ENCODE measurements at regions of chr3 and their contacts with region 1.

Region 1: DNA sequence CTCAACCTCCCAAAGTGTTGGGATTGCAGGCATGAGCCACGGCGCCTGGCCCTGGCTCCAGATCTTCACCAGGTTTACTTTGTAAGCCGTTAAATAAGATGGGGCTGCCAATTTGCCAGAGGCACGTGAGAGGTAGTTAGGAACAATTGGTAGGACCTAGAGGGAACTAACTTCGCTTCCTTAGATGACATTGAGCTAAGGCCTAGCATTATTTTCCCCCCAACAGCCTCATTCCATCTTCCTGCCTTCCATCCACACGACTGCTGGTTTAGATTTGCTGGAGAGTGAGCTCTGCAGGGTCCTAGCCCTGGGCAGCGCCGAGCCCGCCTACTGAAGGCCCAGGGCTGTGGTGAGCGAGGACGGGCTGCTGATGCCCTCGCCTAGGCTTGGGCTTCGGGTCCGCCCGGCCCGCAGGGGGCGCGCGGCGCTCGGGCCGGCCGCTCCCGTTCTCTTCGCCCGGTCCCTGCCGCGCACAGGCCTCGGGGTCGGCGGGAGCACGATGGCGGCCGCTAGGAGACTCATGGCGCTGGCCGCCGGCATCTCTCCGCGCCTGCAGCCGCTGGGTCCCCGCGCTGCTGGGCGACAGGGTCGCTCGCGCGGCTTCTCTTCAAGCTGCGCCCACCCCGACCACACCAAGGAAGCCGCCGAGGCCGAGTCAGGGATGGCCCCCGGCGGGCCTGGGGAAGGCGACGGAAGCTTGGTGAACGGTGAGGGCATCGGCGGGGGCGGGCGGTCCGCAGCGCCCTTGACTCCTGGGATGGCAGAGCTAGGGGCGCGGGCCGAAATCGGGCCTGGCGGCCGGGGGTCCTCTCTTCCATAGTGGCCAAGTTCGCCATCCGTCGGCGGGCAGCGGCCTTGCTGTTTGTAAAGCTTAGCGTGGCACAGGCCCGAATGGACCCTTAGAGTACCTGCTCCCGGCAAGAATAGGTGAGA is 21.9 kb downstream of the DHX30 start:
- DNase-seq: peak; percentile 72 to 89
- H3K4me3 ChIP-seq: peak overlapping the region; percentile 66
- H3K4me3 Mint-ChIP-seq: peak overlapping the region; percentile 81
- H3K27ac Mint-ChIP-seq: peak overlapping the region; percentile 35
- H3K4me1 ChIP-seq: 0 out of 2 replicates have a peak, but pooled peaks cover 3% of the 10 kb centered on the region
- H3K4me1 Mint-ChIP-seq: peaks cover 6% of the 10 kb centered on the region
- H3K27me3 ChIP-seq: no peaks in the 10 kb centered on the region
- H3K27me3 Mint-ChIP-seq: no peaks in the 10 kb centered on the region
- CTCF ChIP-seq: peak; percentile 60 to 79

Region 2: GRCh38 chr3:47802734-47803477 is 21.9 kb before region 1 on chr3 and contains the start of gene DHX30:
- CTCF ChIA-PET with region 1: interaction called, 8 read pairs
- POLR2A ChIA-PET with region 1: no interaction called
- intact Hi-C with region 1: loop called (anchors 2 kb)
- DNase-seq: peak; percentile 84 to 89
- H3K4me3 ChIP-seq: peak within 1 kb of the TSS; percentile 50
- H3K4me3 Mint-ChIP-seq: peak within 1 kb of the TSS; percentile 89
- H3K27ac Mint-ChIP-seq: peak within 1 kb of the TSS; percentile 92
- H3K4me1 ChIP-seq: peaks cover 15% of the 10 kb centered on the region
- H3K4me1 Mint-ChIP-seq: peaks cover 6% of the 10 kb centered on the region
- H3K27me3 ChIP-seq: no peaks in the 10 kb centered on the region
- H3K27me3 Mint-ChIP-seq: no peaks in the 10 kb centered on the region
- CTCF ChIP-seq: no peak
- total RNA-seq, gene DHX30: 71.8 and 75.7 TPM in 2 replicates

Measured in Caco-2 (cell line).